Activated CD4-positive, alpha-beta T cell treated with anti-CD3 and anti-CD28 coated beads for 36 hours (primary cell): ENCODE measurements at regions of chr18 and their contacts with region 1.

Region 1: DNA sequence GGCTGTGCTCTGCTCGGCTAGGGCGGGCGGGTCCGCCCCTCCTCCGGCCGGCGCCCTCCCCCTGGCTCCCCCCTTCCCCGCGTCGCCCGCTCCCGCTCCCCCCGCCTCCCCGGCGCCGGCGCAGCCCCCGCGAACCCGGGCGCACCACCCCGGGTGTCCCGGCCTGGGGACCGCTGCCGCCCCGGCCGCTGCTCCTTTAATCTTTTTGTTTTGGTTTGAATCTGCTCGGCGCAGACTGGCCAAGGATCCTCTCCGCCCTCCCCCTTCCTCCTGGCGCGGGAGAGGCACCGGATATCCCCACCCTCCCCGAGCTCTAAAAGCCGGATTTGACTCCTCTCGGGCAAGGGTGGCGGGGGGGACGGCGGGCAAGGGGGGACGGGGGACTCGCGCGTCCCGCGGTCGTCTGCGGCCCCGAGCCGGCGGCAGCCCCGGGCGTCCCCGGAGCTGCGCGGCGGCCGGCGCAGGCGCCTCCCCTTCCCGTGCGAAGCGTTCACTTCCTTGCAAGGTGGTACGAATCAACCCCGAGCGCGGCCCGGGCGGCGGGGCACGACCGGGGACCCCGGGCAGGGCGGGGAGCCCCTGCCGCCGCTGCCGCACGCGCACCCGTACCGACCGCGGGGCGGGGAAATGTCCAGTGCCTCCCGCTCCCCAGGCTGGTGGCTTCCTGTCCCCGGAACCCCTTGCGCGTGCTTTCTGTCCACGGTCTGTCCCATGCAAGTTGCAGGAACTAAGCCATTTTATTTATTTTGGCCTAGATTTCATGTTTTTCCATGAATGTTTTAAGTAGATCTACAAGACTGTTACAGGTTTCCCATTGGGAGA is at the start of gene PTGR3:
- DNase-seq: peak; percentile 91
- ATAC-seq: peak; percentile 56
- H3K4me3 Mint-ChIP-seq: peak within 1 kb of the TSS; percentile 100
- H3K27ac Mint-ChIP-seq: peak within 1 kb of the TSS; percentile 97
- H3K4me1 Mint-ChIP-seq: peaks cover 54% of the 10 kb centered on the region
- H3K27me3 Mint-ChIP-seq: peaks cover 11% of the 10 kb centered on the region
- total RNA-seq, gene PTGR3: 14.4 to 23.3 TPM

Region 2: GRCh38 chr18:74495581-74496507 is 713.5 kb before region 1 on chr18 and contains the start of gene CNDP2:
- CTCF ChIA-PET with region 1: interaction called, 3 read pairs
- POLR2A ChIA-PET with region 1: no interaction called
- intact Hi-C with region 1: loop called (anchors 1 to 10 kb)
- DNase-seq: peak; percentile 100
- ATAC-seq: peak; percentile 71
- H3K4me3 Mint-ChIP-seq: peak within 1 kb of the TSS; percentile 81
- H3K27ac Mint-ChIP-seq: peak within 1 kb of the TSS; percentile 100
- H3K4me1 Mint-ChIP-seq: peaks cover 37% of the 10 kb centered on the region
- H3K27me3 Mint-ChIP-seq: no peaks in the 10 kb centered on the region
- total RNA-seq, gene CNDP2: 128 to 146 TPM

Region 3: DNA sequence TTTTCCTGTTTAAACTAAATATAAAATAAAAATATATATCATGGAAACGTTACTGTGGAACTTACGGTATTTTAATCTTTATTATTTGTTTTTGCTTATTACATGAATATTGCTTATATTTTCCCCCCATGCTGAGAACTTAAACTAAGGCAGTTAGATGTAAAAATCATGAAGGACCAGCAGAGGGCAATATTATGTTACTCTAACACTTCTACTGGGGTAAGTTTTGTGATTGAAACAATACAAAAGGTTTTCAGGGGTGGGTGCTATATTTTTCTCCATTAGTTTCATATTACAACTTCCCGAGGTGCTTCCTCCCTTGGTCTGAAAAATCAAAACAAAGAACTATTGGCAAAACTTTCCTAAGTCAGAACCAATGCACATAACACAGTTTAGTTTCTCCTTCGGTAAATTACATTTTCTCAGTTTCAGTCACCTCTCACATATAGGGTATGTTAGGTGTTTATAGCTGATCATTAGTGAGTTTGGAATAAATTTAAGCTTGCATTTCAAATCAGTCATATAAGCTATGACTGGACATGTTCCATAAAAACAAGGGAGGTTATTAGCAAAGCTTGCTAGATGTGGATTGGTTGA is 556.9 kb before region 1 on chr18:
- CTCF ChIA-PET with region 1: no interaction called
- POLR2A ChIA-PET with region 1: no interaction called
- intact Hi-C with region 1: loop called in 1 of 2 experiments (anchors 2 kb)
- DNase-seq: no peak
- ATAC-seq: no peak
- H3K4me3 Mint-ChIP-seq: no peak overlapping the region
- H3K27ac Mint-ChIP-seq: no peak overlapping the region
- H3K4me1 Mint-ChIP-seq: no peaks in the 10 kb centered on the region
- H3K27me3 Mint-ChIP-seq: no peaks in the 10 kb centered on the region

Region 4: DNA sequence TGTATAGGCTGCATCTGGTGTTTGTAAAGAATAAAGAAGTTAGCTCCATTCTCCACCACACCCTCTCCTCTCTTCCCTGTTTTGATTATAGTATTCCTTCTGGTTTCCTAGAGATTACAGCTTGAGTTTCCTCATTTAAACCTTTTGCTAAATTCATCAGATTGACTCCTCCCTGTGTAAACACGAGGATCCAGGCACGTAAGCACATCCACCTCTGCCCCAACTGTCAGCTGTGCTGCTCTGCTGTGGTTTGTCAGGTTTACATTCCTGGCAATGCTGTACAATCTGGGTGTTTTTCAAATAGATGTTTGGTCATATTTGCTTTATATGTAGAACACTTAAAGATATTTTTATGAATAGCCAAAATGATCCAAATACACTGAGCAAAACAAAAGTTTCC is 303.2 kb before region 1 on chr18:
- CTCF ChIA-PET with region 1: no interaction called
- POLR2A ChIA-PET with region 1: no interaction called
- intact Hi-C with region 1: loop called in 1 of 2 experiments (anchors 10 kb)
- DNase-seq: no peak
- ATAC-seq: no peak
- H3K4me3 Mint-ChIP-seq: no peak overlapping the region
- H3K27ac Mint-ChIP-seq: no peak overlapping the region
- H3K4me1 Mint-ChIP-seq: no peaks in the 10 kb centered on the region
- H3K27me3 Mint-ChIP-seq: no peaks in the 10 kb centered on the region

Region 5: DNA sequence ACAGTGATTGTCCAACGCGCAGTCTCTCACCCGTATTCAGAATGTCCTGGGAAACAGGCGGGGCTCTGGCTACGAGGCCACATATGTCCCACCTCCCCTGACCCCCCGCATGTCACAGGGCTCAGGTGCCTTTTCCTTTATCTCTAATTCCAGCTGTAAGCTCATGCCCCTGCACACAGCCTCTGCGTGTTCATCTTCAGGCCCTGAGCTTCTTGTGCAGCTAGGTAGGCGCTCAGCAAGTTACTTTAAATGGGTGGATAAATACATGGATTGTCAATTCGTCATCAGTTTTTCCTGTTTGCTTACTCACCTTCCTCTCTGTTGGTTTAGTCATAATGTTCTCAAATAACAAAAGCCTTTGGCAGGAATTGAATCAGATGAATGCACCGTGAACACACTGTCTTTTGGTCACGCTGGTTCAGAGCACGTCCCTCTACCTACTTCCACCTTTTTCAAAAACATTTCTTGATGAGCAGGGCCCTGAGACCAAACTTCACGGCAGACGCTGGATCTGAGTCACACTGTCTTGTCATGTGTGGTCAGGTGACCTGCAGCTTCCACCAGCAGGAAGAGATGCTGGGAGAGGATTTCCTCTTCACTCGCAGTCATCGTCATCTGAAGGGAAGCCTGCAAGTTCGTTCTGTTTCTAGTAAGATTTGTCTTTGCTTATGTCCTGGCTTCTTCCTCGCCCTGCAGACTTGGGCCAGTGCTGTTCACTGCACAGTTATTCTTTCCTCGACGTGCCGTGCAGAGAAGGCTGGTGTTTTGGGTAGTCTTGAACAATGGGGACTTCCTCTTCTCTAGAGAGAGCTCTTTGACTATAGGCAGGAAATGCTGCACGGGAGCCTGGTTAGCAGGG is 138.5 kb before region 1 on chr18:
- CTCF ChIA-PET with region 1: no interaction called
- POLR2A ChIA-PET with region 1: interaction called, 4 read pairs
- intact Hi-C with region 1: loop called (anchors 1 to 2 kb)
- DNase-seq: peak; percentile 82
- ATAC-seq: peak; percentile 94
- H3K4me3 Mint-ChIP-seq: peak overlapping the region; percentile 63
- H3K27ac Mint-ChIP-seq: peak overlapping the region; percentile 97
- H3K4me1 Mint-ChIP-seq: peaks cover 32% of the 10 kb centered on the region
- H3K27me3 Mint-ChIP-seq: no peaks in the 10 kb centered on the region

Region 6: DNA sequence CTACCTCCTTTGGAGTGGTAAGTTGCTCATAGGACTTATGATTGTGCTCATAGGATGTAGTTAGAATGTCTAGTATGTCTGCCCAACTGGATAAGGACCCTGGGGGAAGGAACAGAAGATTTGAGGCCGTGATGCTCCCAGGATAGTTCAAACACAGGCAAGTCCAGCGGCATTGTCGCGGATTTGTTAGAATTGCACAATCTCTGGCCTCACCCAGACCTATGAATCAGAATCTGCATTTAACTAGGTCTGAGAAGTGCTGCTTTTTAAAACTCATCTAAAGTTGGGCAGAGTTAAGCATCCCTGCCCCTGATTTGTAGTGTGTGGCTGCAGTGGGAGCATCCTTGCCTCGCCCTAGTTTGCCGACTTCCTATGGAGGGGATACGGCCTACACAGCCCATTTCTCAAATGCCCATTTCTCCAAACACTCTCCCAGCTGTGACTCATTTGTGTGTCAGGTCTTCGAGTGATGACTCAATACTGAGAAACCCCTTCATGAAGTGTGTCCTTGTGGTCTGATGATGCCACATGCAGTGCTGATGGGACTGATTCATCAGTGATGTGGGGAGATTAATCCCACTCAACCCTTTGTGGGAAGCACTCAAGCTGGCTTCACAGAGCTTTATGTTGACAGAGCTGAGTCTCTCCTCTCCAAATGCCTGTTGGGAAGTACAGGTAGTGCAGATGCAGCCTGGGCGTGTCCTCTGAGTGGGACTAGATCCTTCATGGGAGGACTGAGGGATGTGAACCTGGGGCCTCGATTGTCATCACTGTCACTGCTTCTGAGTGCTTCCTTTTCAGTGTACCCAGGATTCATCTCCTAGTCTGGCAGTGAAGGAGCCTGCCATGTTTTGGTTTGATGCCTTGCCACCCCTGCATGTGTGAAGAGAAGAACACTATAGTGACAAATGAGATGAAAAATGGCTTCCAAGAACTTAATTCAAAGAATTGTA is 199.5 kb after region 1 on chr18:
- CTCF ChIA-PET with region 1: interaction called, 3 read pairs
- POLR2A ChIA-PET with region 1: no interaction called
- intact Hi-C with region 1: loop called (anchors 2 kb)
- DNase-seq: peak; percentile 67
- ATAC-seq: peak; percentile 95
- H3K4me3 Mint-ChIP-seq: no peak overlapping the region
- H3K27ac Mint-ChIP-seq: no peak overlapping the region
- H3K4me1 Mint-ChIP-seq: peaks cover 24% of the 10 kb centered on the region
- H3K27me3 Mint-ChIP-seq: peaks cover 14% of the 10 kb centered on the region

Region 7: DNA sequence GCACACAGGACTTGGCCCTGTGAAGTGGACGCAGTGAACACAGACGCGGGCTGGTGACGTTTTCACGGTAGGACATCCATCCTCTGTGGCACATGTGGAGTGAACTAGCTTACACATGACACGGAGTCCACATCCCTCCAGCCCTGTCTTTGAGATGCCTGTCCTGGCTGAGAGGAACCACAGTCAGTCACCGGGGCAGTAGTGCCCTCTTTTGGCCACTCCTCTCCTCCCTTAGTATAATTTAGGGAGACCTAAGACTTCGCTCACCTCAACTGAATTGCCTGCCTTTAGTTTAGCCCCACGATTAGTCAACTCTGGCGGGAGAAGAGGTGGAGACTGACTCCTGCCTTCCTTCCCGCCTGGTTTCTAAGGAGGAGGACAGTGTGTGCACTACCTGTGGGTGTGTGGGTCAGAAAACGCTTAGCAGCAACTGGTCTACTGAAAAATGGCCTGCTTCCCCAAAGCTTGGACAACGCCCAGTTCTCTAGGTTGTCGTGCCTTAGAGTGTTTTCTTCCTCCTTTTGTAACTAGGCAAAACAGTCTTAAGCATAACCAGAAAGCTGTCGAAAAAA is 1852.7 kb after region 1 on chr18:
- CTCF ChIA-PET with region 1: no interaction called
- POLR2A ChIA-PET with region 1: no interaction called
- intact Hi-C with region 1: loop called in 1 of 2 experiments (anchors 5 kb)
- DNase-seq: peak; percentile 42
- ATAC-seq: peak; percentile 17
- H3K4me3 Mint-ChIP-seq: peak overlapping the region; percentile 47
- H3K27ac Mint-ChIP-seq: peak overlapping the region; percentile 98
- H3K4me1 Mint-ChIP-seq: peaks cover 83% of the 10 kb centered on the region
- H3K27me3 Mint-ChIP-seq: no peaks in the 10 kb centered on the region